Psoas muscle (tissue), 8 donors: ENCODE measurements at regions of chr6 and their contacts with region 1.

Region 1: DNA sequence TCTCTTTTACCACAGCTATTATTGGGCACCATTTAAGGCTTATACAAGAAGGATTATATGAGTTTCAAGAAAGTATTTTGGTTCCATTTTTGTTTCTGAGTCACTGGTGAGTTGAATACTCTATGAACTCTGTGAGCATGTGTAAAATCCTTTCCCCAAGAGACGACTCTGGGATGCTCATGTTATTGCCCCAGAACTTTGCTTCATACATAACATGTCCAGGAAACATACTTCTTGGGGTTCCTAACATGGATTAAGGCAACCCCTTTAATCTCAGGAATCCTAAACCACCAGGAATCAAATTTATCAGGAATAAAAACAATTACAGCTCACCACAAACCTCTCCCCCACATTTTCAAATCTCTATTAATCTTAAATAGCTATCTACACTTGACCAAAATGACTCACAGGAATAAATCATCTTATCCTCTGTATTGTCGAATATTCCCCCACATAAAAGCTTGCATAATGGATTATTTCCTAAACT is 117.5 kb upstream of the COL21A1 start:
- DNase-seq: no peak
- ATAC-seq: no peak
- H3K4me3 ChIP-seq: no peak overlapping the region
- H3K27ac ChIP-seq: no peak overlapping the region
- H3K4me1 ChIP-seq: peaks cover 2% of the 10 kb centered on the region
- H3K27me3 ChIP-seq: no peaks in the 10 kb centered on the region
- CTCF ChIP-seq: no peak

Region 2: GRCh38 chr6:56416247-56416646 is 51.4 kb after region 1 on chr6:
- intact Hi-C with region 1: no loop called
- DNase-seq: no peak
- ATAC-seq: no peak
- H3K4me3 ChIP-seq: no peak overlapping the region
- H3K27ac ChIP-seq: no peak overlapping the region
- H3K4me1 ChIP-seq: no peaks in the 10 kb centered on the region
- H3K27me3 ChIP-seq: no peaks in the 10 kb centered on the region
- CTCF ChIP-seq: no peak

Region 3: DNA sequence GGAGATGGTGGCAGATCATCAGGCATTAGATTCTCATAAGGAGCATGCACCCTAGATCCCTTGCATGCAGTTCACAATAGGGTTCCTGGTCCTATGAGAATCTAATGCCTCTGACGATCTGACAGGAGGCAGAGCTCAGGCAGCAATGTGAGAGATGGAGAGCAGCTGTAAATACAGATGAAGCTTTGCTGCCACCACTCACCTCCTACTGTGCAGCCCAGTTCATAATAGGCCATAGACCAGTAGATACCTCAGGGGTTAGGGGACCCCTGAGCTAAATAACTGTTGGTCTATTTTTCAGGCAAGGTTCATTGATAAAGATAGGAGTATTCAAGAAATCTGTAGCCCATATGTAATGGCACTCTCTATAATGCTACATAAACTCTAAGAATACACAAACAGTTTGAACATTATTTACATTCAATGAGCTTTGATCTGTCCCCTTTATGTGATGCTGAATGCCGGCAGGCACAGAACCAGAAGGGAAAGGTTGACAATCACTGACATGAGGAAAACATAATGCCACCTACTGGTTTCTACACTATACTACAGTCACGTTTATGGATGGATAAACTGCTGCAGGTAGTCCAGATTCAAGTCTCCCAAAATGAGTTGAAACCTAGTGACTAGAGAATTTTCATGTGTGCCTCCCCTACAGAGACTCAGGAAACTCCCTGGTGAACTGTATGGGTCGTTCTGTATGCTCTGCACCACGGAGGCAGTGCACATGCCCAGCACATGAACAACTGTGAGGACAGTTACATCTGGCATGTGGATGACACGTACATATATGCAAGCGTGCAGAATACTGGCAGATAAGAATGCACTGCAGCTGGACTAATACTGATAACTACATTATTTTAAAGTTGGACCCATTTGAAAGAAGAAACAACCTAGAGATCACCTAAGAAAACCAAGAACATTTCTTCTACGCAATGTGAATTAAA is 205.8 kb after region 1 on chr6:
- intact Hi-C with region 1: loop called (anchors 5 kb)
- DNase-seq: no peak
- ATAC-seq: peak; percentile 36 to 73 (median 60)
- H3K4me3 ChIP-seq: no peak overlapping the region
- H3K27ac ChIP-seq: no peak overlapping the region
- H3K4me1 ChIP-seq: no peaks in the 10 kb centered on the region
- H3K27me3 ChIP-seq: no peaks in the 10 kb centered on the region
- CTCF ChIP-seq: peak; percentile 49

Region 4: GRCh38 chr6:56579155-56579851 is 214.4 kb after region 1 on chr6:
- intact Hi-C with region 1: loop called (anchors 5 kb)
- DNase-seq: no peak
- ATAC-seq: no peak
- H3K4me3 ChIP-seq: no peak overlapping the region
- H3K27ac ChIP-seq: no peak overlapping the region
- H3K4me1 ChIP-seq: no peaks in the 10 kb centered on the region
- H3K27me3 ChIP-seq: no peaks in the 10 kb centered on the region
- CTCF ChIP-seq: no peak